Caco-2 (cell line): ENCODE measurements at regions of chrX and their contacts with region 1.

Region 1: DNA sequence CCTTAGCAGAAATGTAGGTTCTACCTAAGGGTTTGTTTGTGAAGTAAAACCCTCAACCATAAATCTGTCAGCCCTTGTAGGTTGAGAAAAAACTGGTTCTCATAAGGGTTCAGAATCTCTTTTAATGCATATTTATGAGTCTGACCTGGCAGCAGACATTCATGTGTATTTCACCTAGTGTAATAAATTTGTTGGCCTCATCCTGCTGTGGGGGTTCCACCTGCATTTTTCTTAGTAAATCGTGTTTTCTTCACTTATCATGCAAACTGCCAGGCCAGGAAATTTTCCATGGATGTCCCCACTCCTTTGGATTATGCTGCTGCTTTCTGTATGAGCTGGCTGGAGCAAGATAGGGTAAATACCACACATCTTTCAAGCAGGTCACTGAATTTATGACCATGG is 42.4 kb downstream of the KLHL13 start:
- DNase-seq: no peak
- H3K4me3 ChIP-seq: no peak overlapping the region
- H3K4me3 Mint-ChIP-seq: no peak overlapping the region
- H3K27ac Mint-ChIP-seq: no peak overlapping the region
- H3K4me1 ChIP-seq: no peaks in the 10 kb centered on the region
- H3K4me1 Mint-ChIP-seq: peaks cover 11% of the 10 kb centered on the region
- H3K27me3 ChIP-seq: no peaks in the 10 kb centered on the region
- H3K27me3 Mint-ChIP-seq: no peaks in the 10 kb centered on the region
- CTCF ChIP-seq: no peak

Region 2: DNA sequence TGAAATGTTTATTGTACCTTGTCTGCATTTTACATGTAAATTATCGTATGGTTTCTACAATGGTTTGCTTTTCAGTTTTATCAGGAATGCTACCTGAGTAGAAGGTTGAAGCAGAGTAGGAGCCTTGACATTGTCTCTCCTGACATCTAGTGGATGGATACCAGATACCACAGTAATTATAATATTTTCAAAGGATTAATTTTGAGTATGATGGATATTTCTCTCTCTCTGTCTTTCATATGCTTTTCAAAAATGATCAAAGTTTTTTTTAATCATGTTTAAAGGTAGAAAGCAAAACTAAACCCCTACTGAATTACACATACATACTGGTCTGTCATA is 151.9 kb after region 1 on chrX:
- CTCF ChIA-PET with region 1: no interaction called
- POLR2A ChIA-PET with region 1: no interaction called
- intact Hi-C with region 1: loop called (anchors 5 kb)
- DNase-seq: peak in 1 of 2 experiments; percentile 3
- H3K4me3 ChIP-seq: no peak overlapping the region
- H3K4me3 Mint-ChIP-seq: no peak overlapping the region
- H3K27ac Mint-ChIP-seq: no peak overlapping the region
- H3K4me1 ChIP-seq: no peaks in the 10 kb centered on the region
- H3K4me1 Mint-ChIP-seq: no peaks in the 10 kb centered on the region
- H3K27me3 ChIP-seq: no peaks in the 10 kb centered on the region
- H3K27me3 Mint-ChIP-seq: no peaks in the 10 kb centered on the region
- CTCF ChIP-seq: peak in 1 of 2 experiments; percentile 45